ENCODE measurements at regions of chr3 and their contacts with region 1.

Region 1: GRCh38 chr3:170811928-170812591 is 57.9 kb downstream of the RPL22L1 start:
- DNase-seq: peak; percentile 62
- H3K4me3 ChIP-seq: no peak overlapping the region
- H3K27ac ChIP-seq: no peak overlapping the region
- H3K4me1 ChIP-seq: no peaks in the 10 kb centered on the region
- H3K27me3 ChIP-seq: no peaks in the 10 kb centered on the region
- CTCF ChIP-seq: peak; percentile 71 to 93 (median 86)
- POLR2A ChIP-seq: no peak

Region 2: DNA sequence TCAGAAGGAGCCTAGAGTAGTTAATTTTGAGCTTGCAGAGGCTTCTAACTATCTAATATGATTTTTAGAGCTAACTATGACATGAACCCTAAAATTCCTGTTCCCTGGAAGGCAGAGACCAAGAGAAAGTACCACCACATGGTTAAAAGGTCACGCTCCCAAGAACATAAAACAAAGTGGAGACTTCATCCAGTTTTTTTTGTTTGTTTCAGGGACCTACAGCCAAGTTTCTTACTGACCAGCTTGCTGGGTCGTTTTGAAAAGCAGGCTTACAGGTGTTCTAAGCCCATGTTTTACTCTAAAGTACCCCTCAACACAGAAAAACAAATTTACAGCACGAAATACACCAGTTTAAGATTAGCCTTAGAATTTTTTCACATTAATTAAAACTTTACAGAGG is 494.1 kb before region 1 on chr3:
- intact Hi-C with region 1: loop called (anchors 10 kb)
- DNase-seq: no peak
- H3K4me3 ChIP-seq: no peak overlapping the region
- H3K27ac ChIP-seq: no peak overlapping the region
- H3K4me1 ChIP-seq: no peaks in the 10 kb centered on the region
- H3K27me3 ChIP-seq: no peaks in the 10 kb centered on the region
- CTCF ChIP-seq: no peak
- POLR2A ChIP-seq: no peak

Region 3: DNA sequence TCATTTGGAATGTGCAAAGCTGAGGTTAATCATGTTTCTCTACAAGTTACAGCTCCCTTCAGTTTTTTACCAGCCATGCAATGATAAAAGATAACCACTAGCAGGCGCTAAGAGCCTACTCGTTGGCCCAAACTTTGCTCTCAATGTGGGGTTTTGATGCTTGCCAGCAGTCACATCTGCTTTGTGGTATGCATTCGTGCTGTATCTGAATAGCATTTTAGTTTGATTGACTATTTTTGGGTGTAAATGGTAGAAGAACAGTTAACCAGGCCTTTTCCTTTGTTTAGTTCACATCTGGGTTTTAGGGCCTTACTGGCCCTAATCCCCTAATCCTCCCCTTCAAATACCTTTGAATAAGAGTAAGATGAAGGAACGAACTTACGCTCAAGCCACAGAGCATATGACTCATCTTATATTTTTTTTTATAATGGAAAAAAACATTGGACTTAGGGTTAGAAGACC is 397.8 kb before region 1 on chr3:
- intact Hi-C with region 1: loop called (anchors 2 kb)
- DNase-seq: no peak
- H3K4me3 ChIP-seq: no peak overlapping the region
- H3K27ac ChIP-seq: no peak overlapping the region
- H3K4me1 ChIP-seq: peaks cover 4% of the 10 kb centered on the region
- H3K27me3 ChIP-seq: no peaks in the 10 kb centered on the region
- CTCF ChIP-seq: peak; percentile 67 to 90 (median 82)
- POLR2A ChIP-seq: no peak